Activated CD4-positive, alpha-beta memory T cell treated with anti-CD3 and anti-CD28 coated beads for 36 hours (primary cell): ENCODE measurements at regions of chr19 and their contacts with region 1.

Region 1: DNA sequence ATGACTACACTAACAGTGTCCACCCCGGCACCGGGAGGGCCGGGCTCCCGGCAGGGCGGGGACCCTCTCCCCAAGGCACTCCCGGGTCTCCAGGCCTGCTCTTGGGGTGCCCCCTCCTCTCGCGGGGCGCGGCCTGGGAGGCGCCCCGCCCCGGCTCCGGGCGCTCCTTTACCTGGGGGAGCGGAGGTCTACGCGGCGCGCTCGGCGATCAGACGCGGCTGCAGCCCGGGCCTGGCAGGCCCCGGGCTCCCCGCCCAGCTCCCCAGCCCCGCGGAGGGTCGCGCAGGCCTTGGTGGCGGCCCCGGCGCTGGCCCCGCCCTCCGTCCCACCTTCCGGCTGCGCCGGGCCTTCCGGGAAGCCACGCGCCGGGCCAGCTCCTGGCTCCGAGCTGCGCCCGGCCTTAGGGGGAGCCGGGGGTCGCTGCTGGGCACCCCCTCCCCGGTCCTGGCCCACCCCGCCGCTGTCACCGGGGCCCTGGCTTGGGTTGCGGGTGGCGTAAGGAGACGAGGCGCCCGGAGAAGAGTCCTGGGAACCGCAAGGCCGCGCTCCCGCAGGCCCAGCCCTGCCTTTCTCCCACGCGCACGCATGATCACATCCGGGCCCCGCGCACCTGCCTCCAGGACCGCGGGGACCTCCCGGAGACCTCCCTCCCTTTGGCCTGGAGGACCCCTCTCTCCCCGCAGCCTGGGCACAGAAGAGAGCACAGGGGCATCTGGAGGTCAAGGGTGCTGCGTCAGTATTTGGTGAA is at the start of gene C19orf12:
- DNase-seq: peak; percentile 74
- H3K4me3 Mint-ChIP-seq: peak within 1 kb of the TSS; percentile 87
- H3K27ac Mint-ChIP-seq: peak within 1 kb of the TSS; percentile 98
- H3K4me1 Mint-ChIP-seq: peaks cover 48% of the 10 kb centered on the region
- H3K27me3 Mint-ChIP-seq: no peaks in the 10 kb centered on the region
- total RNA-seq, gene C19orf12: 32.6 to 32.8 TPM

Region 2: GRCh38 chr19:29457413-29457812 is 257.7 kb before region 1 on chr19:
- CTCF ChIA-PET with region 1: no interaction called
- POLR2A ChIA-PET with region 1: no interaction called
- intact Hi-C with region 1: no loop called
- DNase-seq: no peak
- H3K4me3 Mint-ChIP-seq: no peak overlapping the region
- H3K27ac Mint-ChIP-seq: no peak overlapping the region
- H3K4me1 Mint-ChIP-seq: no peaks in the 10 kb centered on the region
- H3K27me3 Mint-ChIP-seq: peaks cover 16% of the 10 kb centered on the region

Region 3: GRCh38 chr19:29622138-29623070 is 92.7 kb before region 1 on chr19:
- CTCF ChIA-PET with region 1: interaction called, 13 read pairs
- POLR2A ChIA-PET with region 1: interaction called, 3 read pairs
- intact Hi-C with region 1: no loop called
- DNase-seq: peak; percentile 32
- H3K4me3 Mint-ChIP-seq: no peak overlapping the region
- H3K27ac Mint-ChIP-seq: no peak overlapping the region
- H3K4me1 Mint-ChIP-seq: peaks cover 43% of the 10 kb centered on the region
- H3K27me3 Mint-ChIP-seq: no peaks in the 10 kb centered on the region

Region 4: GRCh38 chr19:29671393-29672160 is 43.5 kb before region 1 on chr19:
- CTCF ChIA-PET with region 1: interaction called, 70 read pairs
- POLR2A ChIA-PET with region 1: interaction called, 9 read pairs
- intact Hi-C with region 1: loop called (anchors 2 kb)
- DNase-seq: peak; percentile 95
- H3K4me3 Mint-ChIP-seq: peak overlapping the region; percentile 66
- H3K27ac Mint-ChIP-seq: peak overlapping the region; percentile 99
- H3K4me1 Mint-ChIP-seq: peaks cover 89% of the 10 kb centered on the region
- H3K27me3 Mint-ChIP-seq: no peaks in the 10 kb centered on the region

Region 5: GRCh38 chr19:29704562-29705558 is 10.3 kb before region 1 on chr19:
- CTCF ChIA-PET with region 1: interaction called, 23 read pairs
- POLR2A ChIA-PET with region 1: interaction called, 5 read pairs
- intact Hi-C with region 1: loop called (anchors 1 kb)
- DNase-seq: no peak
- H3K4me3 Mint-ChIP-seq: no peak overlapping the region
- H3K27ac Mint-ChIP-seq: peak overlapping the region; percentile 95
- H3K4me1 Mint-ChIP-seq: peaks cover 31% of the 10 kb centered on the region
- H3K27me3 Mint-ChIP-seq: no peaks in the 10 kb centered on the region

Region 6: DNA sequence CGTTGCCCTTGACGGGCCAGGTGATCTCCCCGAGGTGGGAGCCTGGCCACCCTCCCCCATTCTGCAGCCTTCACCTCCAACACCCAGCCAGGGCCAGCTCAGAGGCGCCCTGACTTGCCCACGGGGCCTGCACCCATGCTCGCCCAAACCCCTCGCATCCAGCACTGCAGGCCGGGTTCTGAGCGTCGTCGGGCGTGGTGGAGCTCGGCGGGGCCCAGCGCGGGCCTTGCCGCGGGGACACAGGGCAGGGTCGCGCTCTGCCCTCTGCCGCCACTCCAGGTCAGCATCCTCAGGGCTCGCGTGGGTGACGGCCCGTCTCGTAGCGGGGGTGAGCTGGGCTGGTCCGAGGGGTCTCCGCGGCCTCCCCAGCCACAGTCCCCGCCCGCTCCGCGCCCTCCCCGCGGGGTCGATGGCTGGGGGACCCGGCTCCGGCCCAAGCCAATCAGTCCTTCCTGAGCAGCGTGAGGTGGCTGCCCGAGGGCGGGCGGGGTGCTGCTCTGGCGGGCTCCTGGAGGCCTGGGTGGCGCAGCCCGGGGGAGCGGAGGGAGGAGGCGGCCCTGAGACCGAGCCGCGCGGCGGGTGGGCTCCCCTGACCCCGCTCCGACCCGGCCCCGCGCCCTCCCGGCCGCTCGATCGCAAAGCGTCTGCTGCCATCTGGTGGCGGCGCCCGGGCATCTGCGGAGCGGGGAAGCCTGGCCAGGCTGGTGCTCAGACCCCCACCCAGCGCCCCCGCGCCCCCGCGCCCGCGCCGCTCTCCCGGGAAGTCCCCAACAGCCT is 158.1 kb after region 1 on chr19:
- CTCF ChIA-PET with region 1: interaction called, 14 read pairs
- POLR2A ChIA-PET with region 1: no interaction called
- intact Hi-C with region 1: no loop called
- DNase-seq: peak; percentile 73
- H3K4me3 Mint-ChIP-seq: peak overlapping the region; percentile 52
- H3K27ac Mint-ChIP-seq: no peak overlapping the region
- H3K4me1 Mint-ChIP-seq: peaks cover 9% of the 10 kb centered on the region
- H3K27me3 Mint-ChIP-seq: peaks cover 18% of the 10 kb centered on the region